ENCODE measurements at regions of chr15 and their contacts with region 1.

Region 1: DNA sequence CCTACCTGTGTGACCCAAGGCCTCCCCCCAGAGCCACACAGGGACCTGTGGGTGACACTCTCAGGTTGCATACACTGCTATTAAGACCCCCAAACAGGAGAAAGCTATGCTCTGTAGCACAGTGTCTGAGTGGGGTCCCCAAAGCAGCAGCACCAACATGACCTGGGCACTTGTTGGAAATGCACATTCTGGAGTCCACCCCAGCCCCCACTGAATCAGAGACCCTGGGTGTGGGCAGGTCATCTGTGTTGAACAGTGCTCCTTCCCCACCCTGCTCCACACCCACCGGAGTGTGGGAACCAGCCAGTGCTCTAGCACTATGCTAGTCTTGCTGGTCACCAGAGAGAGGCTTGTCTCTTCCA is 76.1 kb downstream of the ADAMTS17 start:
- DNase-seq: no peak
- H3K4me3 ChIP-seq: no peak overlapping the region
- H3K4me3 Mint-ChIP-seq: no peak overlapping the region
- H3K27ac Mint-ChIP-seq: no peak overlapping the region
- H3K4me1 ChIP-seq: no peaks in the 10 kb centered on the region
- H3K4me1 Mint-ChIP-seq: no peaks in the 10 kb centered on the region
- H3K27me3 ChIP-seq: no peaks in the 10 kb centered on the region
- H3K27me3 Mint-ChIP-seq: peaks cover 9% of the 10 kb centered on the region
- CTCF ChIP-seq: no peak

Region 2: DNA sequence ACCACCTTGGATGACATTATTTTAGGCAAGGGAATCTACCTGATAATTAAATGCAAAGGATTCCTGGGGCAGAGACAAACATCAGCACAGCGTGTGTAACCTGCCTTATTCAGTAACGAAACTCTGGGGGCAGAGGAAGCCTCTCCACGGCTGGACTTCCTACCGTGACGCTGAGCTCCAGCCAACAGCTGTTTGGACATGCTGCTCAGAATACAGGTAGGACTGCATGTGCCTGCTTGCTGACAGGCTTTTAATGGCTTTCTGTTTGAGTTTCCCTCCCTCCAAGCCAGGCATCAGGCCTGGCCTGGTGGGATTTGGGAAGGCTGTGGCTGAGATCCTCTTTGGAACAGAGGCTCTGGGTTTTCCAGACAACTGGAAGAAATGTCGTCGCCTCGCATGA is 74.5 kb before region 1 on chr15:
- CTCF ChIA-PET with region 1: no interaction called
- POLR2A ChIA-PET with region 1: no interaction called
- intact Hi-C with region 1: no loop called
- DNase-seq: peak in 1 of 2 experiments; percentile 9
- H3K4me3 ChIP-seq: no peak overlapping the region
- H3K4me3 Mint-ChIP-seq: no peak overlapping the region
- H3K27ac Mint-ChIP-seq: no peak overlapping the region
- H3K4me1 ChIP-seq: no peaks in the 10 kb centered on the region
- H3K4me1 Mint-ChIP-seq: no peaks in the 10 kb centered on the region
- H3K27me3 ChIP-seq: no peaks in the 10 kb centered on the region
- H3K27me3 Mint-ChIP-seq: no peaks in the 10 kb centered on the region
- CTCF ChIP-seq: no peak

Region 3: GRCh38 chr15:100207070-100207469 is 58.6 kb before region 1 on chr15:
- CTCF ChIA-PET with region 1: no interaction called
- POLR2A ChIA-PET with region 1: no interaction called
- intact Hi-C with region 1: loop called (anchors 2 kb)
- DNase-seq: peak; percentile 36 to 58
- H3K4me3 ChIP-seq: no peak overlapping the region
- H3K4me3 Mint-ChIP-seq: no peak overlapping the region
- H3K27ac Mint-ChIP-seq: peak overlapping the region; percentile 19
- H3K4me1 ChIP-seq: peaks cover 46% of the 10 kb centered on the region
- H3K4me1 Mint-ChIP-seq: peaks cover 22% of the 10 kb centered on the region
- H3K27me3 ChIP-seq: no peaks in the 10 kb centered on the region
- H3K27me3 Mint-ChIP-seq: no peaks in the 10 kb centered on the region
- CTCF ChIP-seq: no peak